HepG2 (cell line): ENCODE measurements at regions of chr2 and their contacts with region 1.

Region 1: GRCh38 chr2:203814661-203815540 is 52.7 kb upstream of the CTLA4 start:
- DNase-seq: peak; percentile 88
- ATAC-seq: peak; percentile 68
- H3K4me3 ChIP-seq: peak overlapping the region in 1 of 3 experiments; percentile 34; a peak in 1 of 6 replicates
- H3K27ac ChIP-seq: peak overlapping the region; percentile 85
- H3K4me1 ChIP-seq: peaks cover 86% of the 10 kb centered on the region
- H3K27me3 ChIP-seq: no peaks in the 10 kb centered on the region
- CTCF ChIP-seq: peak; percentile 95
- EP300 ChIP-seq: peak in 1 of 2 experiments; percentile 59; a peak in 2 of 4 replicates
- POLR2A ChIP-seq: no peak
- RAD21 ChIP-seq: peak; percentile 94

Region 2: DNA sequence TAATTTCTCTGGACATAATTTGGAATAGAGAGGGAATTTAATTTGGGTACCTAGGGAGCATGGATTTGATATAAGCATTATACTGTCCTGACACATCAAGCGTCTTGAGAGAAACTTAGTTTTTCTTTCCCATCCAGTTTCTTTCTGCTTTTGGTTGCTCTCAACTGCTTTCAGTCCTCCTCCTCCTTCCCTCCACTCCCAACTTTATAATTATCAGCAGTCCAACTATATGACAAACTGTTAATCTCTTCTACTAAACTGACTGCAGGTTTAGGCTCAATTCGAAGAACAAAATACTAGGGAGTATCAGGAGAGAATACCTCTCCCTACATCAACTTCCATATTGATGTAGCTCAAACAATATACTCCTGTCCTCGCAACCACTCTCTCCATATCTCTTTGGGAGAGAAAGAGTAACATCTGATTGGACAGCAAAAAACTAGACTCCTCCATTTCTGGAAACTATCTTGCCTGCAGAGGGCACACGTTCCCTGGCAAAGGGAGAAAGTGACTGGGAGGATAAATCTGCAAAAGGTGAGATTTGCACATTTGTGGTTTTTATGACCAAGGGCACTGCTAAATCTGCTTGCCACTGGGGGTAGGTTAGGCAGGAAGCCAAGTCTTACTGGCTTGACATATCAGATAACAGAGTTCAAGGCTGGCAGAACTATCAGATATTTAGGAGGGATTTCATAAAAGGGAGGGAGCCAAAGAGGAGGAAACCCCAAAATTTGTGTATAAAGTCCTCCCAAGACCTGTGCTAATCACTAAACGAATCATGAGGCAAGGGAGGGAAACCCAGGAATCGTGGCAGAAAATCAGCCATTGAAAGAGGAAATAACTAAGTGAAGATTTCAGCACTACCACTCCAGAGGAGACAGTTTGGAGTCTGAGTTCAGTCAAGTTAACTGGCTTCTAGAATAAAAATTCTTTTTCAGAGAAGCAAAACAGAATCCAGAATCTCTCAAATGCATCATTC is 983.4 kb before region 1 on chr2:
- CTCF ChIA-PET with region 1: no interaction called
- POLR2A ChIA-PET with region 1: no interaction called
- in situ Hi-C with region 1: loop called (anchors 25 kb)
- intact Hi-C with region 1: loop called (anchors 5 kb)
- DNase-seq: peak; percentile 79
- ATAC-seq: peak; percentile 99
- H3K4me3 ChIP-seq: no peak overlapping the region
- H3K27ac ChIP-seq: no peak overlapping the region
- H3K4me1 ChIP-seq: peaks cover 15% of the 10 kb centered on the region
- H3K27me3 ChIP-seq: no peaks in the 10 kb centered on the region
- CTCF ChIP-seq: peak; percentile 95
- EP300 ChIP-seq: no peak
- POLR2A ChIP-seq: no peak
- RAD21 ChIP-seq: peak; percentile 84

Region 3: GRCh38 chr2:203453858-203454451 is 360.9 kb before region 1 on chr2:
- CTCF ChIA-PET with region 1: interaction called, 10 read pairs
- POLR2A ChIA-PET with region 1: no interaction called
- in situ Hi-C with region 1: no loop called
- intact Hi-C with region 1: loop called (anchors 1 kb)
- DNase-seq: peak; percentile 61
- ATAC-seq: peak; percentile 89
- H3K4me3 ChIP-seq: no peak overlapping the region
- H3K27ac ChIP-seq: no peak overlapping the region
- H3K4me1 ChIP-seq: peaks cover 7% of the 10 kb centered on the region; the same call in 1 of the 2 replicates
- H3K27me3 ChIP-seq: no peaks in the 10 kb centered on the region
- CTCF ChIP-seq: peak; percentile 78
- EP300 ChIP-seq: no peak
- POLR2A ChIP-seq: no peak
- RAD21 ChIP-seq: 0 out of 2 replicates have a peak, but pooled peaks have one; percentile 47

Region 4: DNA sequence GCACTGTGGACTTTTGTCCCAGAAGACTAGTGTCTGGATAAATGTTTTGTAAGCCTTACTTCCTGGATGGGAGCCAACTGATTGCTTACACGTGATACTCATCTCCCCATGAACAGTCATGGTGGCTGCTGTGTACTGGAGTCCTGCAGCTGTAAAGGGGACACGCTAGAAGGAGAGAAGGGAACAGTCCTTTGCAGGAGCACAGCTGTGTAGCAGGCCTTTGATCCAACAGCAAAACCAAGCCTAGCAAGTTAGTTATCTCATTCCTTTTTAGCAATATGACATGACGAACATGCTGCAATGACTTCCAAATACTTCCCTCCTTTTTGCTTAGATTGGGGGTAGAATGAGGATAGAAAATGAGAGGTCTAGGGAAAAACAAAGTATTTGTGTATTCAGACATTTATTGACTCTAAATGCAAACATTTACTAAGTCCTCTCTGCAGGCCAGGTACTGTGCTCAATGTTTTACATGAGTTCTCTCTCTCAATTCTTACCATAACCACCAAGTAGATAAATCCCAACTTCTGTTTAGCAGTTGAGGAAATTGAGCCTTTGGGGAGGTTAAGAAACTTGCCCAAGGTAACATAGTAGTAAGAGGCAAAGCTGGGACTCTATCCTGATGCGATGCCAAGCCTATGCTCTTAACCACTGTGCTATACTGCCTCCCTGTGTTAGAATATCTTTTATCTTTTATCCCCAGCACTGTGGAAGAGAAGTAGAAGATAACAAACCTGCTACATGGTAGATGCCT is 163.9 kb before region 1 on chr2:
- CTCF ChIA-PET with region 1: no interaction called
- POLR2A ChIA-PET with region 1: interaction called, 44 read pairs
- in situ Hi-C with region 1: loop called (anchors 10 kb)
- intact Hi-C with region 1: loop called (anchors 1 kb)
- DNase-seq: peak; percentile 98
- ATAC-seq: peak; percentile 89
- H3K4me3 ChIP-seq: peak overlapping the region; percentile 24 to 59 (median 35); a peak in 5 of 6 replicates
- H3K27ac ChIP-seq: peak overlapping the region; percentile 91
- H3K4me1 ChIP-seq: peaks cover 73% of the 10 kb centered on the region
- H3K27me3 ChIP-seq: no peaks in the 10 kb centered on the region
- CTCF ChIP-seq: peak; percentile 78
- EP300 ChIP-seq: peak in 1 of 2 experiments; percentile 90; a peak in 2 of 4 replicates
- POLR2A ChIP-seq: peak in 1 of 2 experiments; percentile 62; a peak in 2 of 4 replicates
- RAD21 ChIP-seq: peak; percentile 59; the same call in 1 of the 2 replicates

Region 5: GRCh38 chr2:203782262-203782976 is 32.5 kb before region 1 on chr2:
- CTCF ChIA-PET with region 1: no interaction called
- POLR2A ChIA-PET with region 1: interaction called, 225 read pairs
- in situ Hi-C with region 1: no loop called
- intact Hi-C with region 1: loop called (anchors 1 kb)
- DNase-seq: peak; percentile 78
- ATAC-seq: peak; percentile 10; the same call in 1 of the 3 replicates
- H3K4me3 ChIP-seq: no peak overlapping the region
- H3K27ac ChIP-seq: peak overlapping the region; percentile 93
- H3K4me1 ChIP-seq: peaks cover 60% of the 10 kb centered on the region
- H3K27me3 ChIP-seq: no peaks in the 10 kb centered on the region
- CTCF ChIP-seq: peak; percentile 78
- EP300 ChIP-seq: no peak
- POLR2A ChIP-seq: no peak
- RAD21 ChIP-seq: peak; percentile 73